ENCODE measurements at regions of chr13 and their contacts with region 1.

Region 1: GRCh38 chr13:36858290-36858689 is 39.3 kb downstream of the RFXAP start:
- DNase-seq: no peak
- H3K4me3 ChIP-seq: no peak overlapping the region
- H3K27ac ChIP-seq: no peak overlapping the region
- H3K4me1 ChIP-seq: no peaks in the 10 kb centered on the region
- H3K27me3 ChIP-seq: no peaks in the 10 kb centered on the region
- CTCF ChIP-seq: peak in 5 of 6 experiments; percentile 24 to 50 (median 48)
- POLR2A ChIP-seq: no peak

Region 2: DNA sequence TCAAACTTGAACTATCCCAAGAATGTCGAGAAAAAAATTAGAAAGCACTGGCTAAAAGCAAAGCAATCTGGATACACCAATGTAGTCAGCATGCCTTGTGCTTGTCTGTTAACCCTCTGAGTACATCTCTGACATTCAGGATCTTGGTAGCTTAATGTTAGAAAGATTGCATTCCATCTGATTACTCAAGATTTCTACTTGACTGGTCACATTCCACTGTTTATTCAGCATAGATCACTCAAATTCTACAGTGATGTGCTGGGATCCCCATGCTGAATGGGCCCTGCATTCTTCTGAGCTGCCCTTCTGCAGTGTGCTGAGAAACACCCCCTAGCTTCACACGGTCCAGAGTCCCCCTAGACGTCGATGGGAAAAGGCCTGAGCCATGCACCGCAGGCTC is 1086.4 kb before region 1 on chr13:
- intact Hi-C with region 1: no loop called
- DNase-seq: no peak
- H3K4me3 ChIP-seq: no peak overlapping the region
- H3K27ac ChIP-seq: no peak overlapping the region
- H3K4me1 ChIP-seq: no peaks in the 10 kb centered on the region
- H3K27me3 ChIP-seq: no peaks in the 10 kb centered on the region
- CTCF ChIP-seq: no peak
- POLR2A ChIP-seq: no peak

Region 3: GRCh38 chr13:36973621-36974295 is 115.5 kb after region 1 on chr13:
- intact Hi-C with region 1: loop called in 1 of 2 experiments (anchors 10 kb)
- DNase-seq: no peak
- H3K4me3 ChIP-seq: no peak overlapping the region
- H3K27ac ChIP-seq: no peak overlapping the region
- H3K4me1 ChIP-seq: no peaks in the 10 kb centered on the region
- H3K27me3 ChIP-seq: no peaks in the 10 kb centered on the region
- CTCF ChIP-seq: no peak
- POLR2A ChIP-seq: no peak

Region 4: GRCh38 chr13:37899753-37900152 is 1041.5 kb after region 1 on chr13:
- intact Hi-C with region 1: no loop called
- DNase-seq: no peak
- H3K4me3 ChIP-seq: no peak overlapping the region
- H3K27ac ChIP-seq: no peak overlapping the region
- H3K4me1 ChIP-seq: no peaks in the 10 kb centered on the region
- H3K27me3 ChIP-seq: no peaks in the 10 kb centered on the region
- CTCF ChIP-seq: no peak
- POLR2A ChIP-seq: no peak